PC-9 (cell line): ENCODE measurements at regions of chr1 and their contacts with region 1.

Region 1: DNA sequence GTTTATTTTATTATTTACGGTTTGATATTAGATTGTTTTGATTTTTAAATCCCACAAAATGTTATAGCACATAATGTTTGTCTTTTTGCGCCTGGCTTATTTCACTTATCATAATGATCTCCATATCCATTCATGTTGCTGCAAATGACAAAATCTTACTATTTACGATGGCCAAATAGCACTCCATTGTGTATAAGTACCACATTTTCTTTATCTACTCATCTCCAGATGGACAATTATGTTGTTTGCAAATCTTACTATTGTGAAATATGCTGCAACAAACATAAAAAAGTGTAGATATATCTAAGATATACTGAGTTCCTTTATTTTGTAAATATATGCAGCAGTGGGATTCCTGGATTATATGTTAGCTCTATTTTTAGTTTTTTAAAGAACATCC is 1568.3 kb downstream of the AMY1C start:
- DNase-seq: no peak
- H3K4me3 ChIP-seq: no peak overlapping the region
- H3K27ac ChIP-seq: no peak overlapping the region
- H3K4me1 ChIP-seq: no peaks in the 10 kb centered on the region
- H3K27me3 ChIP-seq: no peaks in the 10 kb centered on the region
- CTCF ChIP-seq: no peak

Region 2: DNA sequence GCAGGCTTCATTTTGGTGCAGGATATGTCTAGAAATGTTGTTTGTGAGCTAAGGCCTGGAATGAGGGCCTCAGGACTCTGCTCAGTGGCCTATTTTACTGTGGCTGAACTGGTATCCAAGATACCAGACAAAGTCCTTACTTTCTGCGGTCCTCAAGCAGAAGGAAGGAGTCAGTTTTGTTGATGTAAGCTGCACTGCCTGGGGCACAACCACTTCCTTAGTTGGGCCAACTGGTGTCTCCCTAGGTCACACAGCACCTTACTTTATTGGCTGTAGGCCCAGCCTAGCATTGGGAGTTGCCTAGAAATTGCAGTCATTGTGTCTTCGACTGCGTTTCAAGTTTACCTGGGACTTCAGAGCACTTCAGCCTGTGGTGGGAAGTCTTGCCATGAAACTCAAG is 245.5 kb before region 1 on chr1:
- CTCF ChIA-PET with region 1: no interaction called
- POLR2A ChIA-PET with region 1: interaction called, 17 read pairs
- intact Hi-C with region 1: no loop called
- DNase-seq: peak in 1 of 2 experiments; percentile 28
- H3K4me3 ChIP-seq: no peak overlapping the region
- H3K27ac ChIP-seq: no peak overlapping the region
- H3K4me1 ChIP-seq: no peaks in the 10 kb centered on the region
- H3K27me3 ChIP-seq: no peaks in the 10 kb centered on the region
- CTCF ChIP-seq: no peak